ENCODE measurements at regions of chr9 and their contacts with region 1.

Region 1: GRCh38 chr9:126398403-126399058 is 71.9 kb downstream of the MVB12B start:
- DNase-seq: peak; percentile 79 to 89
- ATAC-seq: peak; percentile 84 to 92 (median 86)
- H3K4me3 ChIP-seq: no peak overlapping the region
- H3K27ac ChIP-seq: no peak overlapping the region
- H3K4me1 ChIP-seq: peaks cover 35% of the 10 kb centered on the region
- H3K27me3 ChIP-seq: no peaks in the 10 kb centered on the region
- CTCF ChIP-seq: peak; percentile 99

Region 2: DNA sequence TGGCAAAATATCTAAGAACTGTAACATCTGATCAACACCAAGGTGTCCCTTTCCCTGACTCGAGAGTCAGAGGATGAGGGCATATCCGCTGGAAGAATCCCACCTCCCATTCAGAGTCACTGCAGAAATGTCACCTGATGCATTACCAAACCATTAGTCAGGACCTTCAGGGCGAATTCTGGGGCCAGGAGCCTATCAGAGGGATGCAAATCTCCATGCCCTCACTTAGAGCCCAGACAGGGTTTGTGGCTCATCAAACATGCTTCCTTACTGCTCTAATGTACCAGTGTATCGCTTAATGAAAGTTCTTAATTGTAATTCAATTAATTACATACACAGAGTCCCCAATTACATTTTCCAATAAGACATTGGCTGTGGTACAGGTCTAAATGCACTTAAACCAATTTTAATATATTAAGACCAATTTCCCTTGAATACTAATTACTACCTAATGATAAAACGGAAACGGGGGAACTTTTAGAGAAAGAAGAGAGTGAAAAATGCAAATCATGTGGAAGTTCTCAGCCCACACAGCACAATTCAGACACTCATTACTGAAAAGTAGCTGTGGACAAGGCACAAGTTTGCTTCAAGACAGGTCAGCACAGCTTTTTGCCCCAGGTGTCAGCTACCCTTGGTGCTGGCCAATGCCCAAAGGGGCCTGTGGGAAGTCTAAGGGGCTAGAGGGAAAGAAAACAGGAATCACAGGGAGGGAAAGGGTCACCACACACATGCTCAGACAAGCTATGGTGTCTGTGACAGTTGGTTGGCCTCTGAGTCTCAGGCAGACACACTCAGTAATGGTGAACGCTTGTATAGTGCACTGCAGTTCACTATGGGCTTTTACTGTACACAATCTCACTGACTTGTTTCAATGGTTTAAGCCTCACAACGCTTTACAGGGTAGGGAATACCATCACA is 903.1 kb before region 1 on chr9:
- intact Hi-C with region 1: no loop called
- DNase-seq: no peak
- ATAC-seq: no peak
- H3K4me3 ChIP-seq: no peak overlapping the region
- H3K27ac ChIP-seq: no peak overlapping the region
- H3K4me1 ChIP-seq: no peaks in the 10 kb centered on the region
- H3K27me3 ChIP-seq: no peaks in the 10 kb centered on the region
- CTCF ChIP-seq: no peak

Region 3: GRCh38 chr9:126228781-126229444 is 169.6 kb before region 1 on chr9:
- intact Hi-C with region 1: loop called in 1 of 2 experiments (anchors 5 kb)
- DNase-seq: peak; percentile 67 to 76
- ATAC-seq: peak; percentile 80 to 92 (median 88)
- H3K4me3 ChIP-seq: no peak overlapping the region
- H3K27ac ChIP-seq: no peak overlapping the region
- H3K4me1 ChIP-seq: no peaks in the 10 kb centered on the region
- H3K27me3 ChIP-seq: peaks cover 0 to 20% (median 6%) of the 10 kb centered on the region in 3 donors
- CTCF ChIP-seq: peak; percentile 91

Region 4: GRCh38 chr9:126301985-126302603 is 96.4 kb before region 1 on chr9:
- intact Hi-C with region 1: loop called in 1 of 2 experiments (anchors 1 kb)
- DNase-seq: peak in 1 of 2 donors; percentile 25
- ATAC-seq: peak; percentile 76 to 91 (median 80)
- H3K4me3 ChIP-seq: no peak overlapping the region
- H3K27ac ChIP-seq: no peak overlapping the region
- H3K4me1 ChIP-seq: no peaks in the 10 kb centered on the region
- H3K27me3 ChIP-seq: no peaks in the 10 kb centered on the region
- CTCF ChIP-seq: peak; percentile 71

Region 5: GRCh38 chr9:126317513-126317912 is 81.0 kb before region 1 on chr9:
- intact Hi-C with region 1: loop called (anchors 1 to 2 kb)
- DNase-seq: peak in 1 of 2 donors; percentile 65
- ATAC-seq: peak; percentile 81 to 96 (median 88)
- H3K4me3 ChIP-seq: no peak overlapping the region
- H3K27ac ChIP-seq: no peak overlapping the region
- H3K4me1 ChIP-seq: no peaks in the 10 kb centered on the region
- H3K27me3 ChIP-seq: no peaks in the 10 kb centered on the region
- CTCF ChIP-seq: peak; percentile 62

Region 6: GRCh38 chr9:126334721-126335621 is 63.6 kb before region 1 on chr9:
- intact Hi-C with region 1: no loop called
- DNase-seq: peak in 1 of 2 donors; percentile 78
- ATAC-seq: peak; percentile 84 to 87 (median 86)
- H3K4me3 ChIP-seq: peak overlapping the region; percentile 55
- H3K27ac ChIP-seq: peak overlapping the region; percentile 74
- H3K4me1 ChIP-seq: peaks cover 75% of the 10 kb centered on the region
- H3K27me3 ChIP-seq: no peaks in the 10 kb centered on the region
- CTCF ChIP-seq: no peak

Region 7: GRCh38 chr9:126490871-126491567 is 92.5 kb after region 1 on chr9:
- intact Hi-C with region 1: loop called (anchors 5 kb)
- DNase-seq: peak in 1 of 2 donors; percentile 9
- ATAC-seq: peak; percentile 55 to 87 (median 72)
- H3K4me3 ChIP-seq: no peak overlapping the region
- H3K27ac ChIP-seq: no peak overlapping the region
- H3K4me1 ChIP-seq: no peaks in the 10 kb centered on the region
- H3K27me3 ChIP-seq: no peaks in the 10 kb centered on the region
- CTCF ChIP-seq: peak; percentile 94

Measured in psoas muscle (tissue), 8 donors.